ENCODE measurements at regions of chr20 and their contacts with region 1.

Region 1: GRCh38 chr20:31674895-31675827 is 37.4 kb downstream of the COX4I2 start:
- DNase-seq: peak; percentile 92
- H3K4me3 Mint-ChIP-seq: peak overlapping the region; percentile 83
- H3K27ac Mint-ChIP-seq: peak overlapping the region; percentile 89
- H3K4me1 Mint-ChIP-seq: peaks cover 80% of the 10 kb centered on the region
- H3K27me3 Mint-ChIP-seq: no peaks in the 10 kb centered on the region

Region 2: DNA sequence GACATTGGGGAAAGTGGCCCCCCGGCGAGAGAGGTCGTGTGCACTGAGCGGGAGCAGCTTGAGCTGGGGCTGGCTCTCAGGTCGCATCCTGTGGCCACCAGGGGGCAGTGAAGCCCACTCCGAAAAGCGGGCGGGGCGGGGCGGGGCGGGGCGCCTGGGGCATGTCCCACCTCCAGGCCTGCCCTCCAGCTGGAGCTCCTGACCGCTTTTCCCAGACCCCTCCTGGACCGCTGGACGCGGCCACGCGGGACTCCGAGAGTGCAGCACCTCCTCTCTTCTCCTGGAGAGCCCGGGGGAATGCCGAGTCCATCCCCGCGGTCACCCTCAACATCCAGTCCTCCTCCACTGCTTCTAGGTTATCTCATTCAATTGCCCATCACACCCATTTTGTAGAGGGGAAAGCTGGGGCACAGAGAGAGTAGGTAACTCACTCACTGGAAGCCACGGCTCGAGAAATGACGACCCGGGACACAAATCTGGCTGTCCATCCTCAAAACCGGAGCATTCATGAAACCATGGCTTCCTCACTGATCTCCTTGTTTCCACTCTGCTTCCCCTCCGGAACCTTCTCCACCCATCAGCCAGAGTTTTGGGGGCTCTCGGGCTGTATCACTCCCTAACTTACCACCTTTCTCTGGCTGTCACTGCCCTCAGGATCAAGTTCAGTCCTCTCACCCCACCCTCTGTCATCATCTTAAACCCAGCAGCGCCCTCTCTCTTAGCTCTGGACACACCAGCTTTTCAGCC is 13.4 kb before region 1 on chr20:
- intact Hi-C with region 1: loop called (anchors 2 kb)
- DNase-seq: peak; percentile 92
- H3K4me3 Mint-ChIP-seq: peak overlapping the region; percentile 78
- H3K27ac Mint-ChIP-seq: peak overlapping the region; percentile 89
- H3K4me1 Mint-ChIP-seq: peaks cover 47% of the 10 kb centered on the region
- H3K27me3 Mint-ChIP-seq: no peaks in the 10 kb centered on the region

Region 3: DNA sequence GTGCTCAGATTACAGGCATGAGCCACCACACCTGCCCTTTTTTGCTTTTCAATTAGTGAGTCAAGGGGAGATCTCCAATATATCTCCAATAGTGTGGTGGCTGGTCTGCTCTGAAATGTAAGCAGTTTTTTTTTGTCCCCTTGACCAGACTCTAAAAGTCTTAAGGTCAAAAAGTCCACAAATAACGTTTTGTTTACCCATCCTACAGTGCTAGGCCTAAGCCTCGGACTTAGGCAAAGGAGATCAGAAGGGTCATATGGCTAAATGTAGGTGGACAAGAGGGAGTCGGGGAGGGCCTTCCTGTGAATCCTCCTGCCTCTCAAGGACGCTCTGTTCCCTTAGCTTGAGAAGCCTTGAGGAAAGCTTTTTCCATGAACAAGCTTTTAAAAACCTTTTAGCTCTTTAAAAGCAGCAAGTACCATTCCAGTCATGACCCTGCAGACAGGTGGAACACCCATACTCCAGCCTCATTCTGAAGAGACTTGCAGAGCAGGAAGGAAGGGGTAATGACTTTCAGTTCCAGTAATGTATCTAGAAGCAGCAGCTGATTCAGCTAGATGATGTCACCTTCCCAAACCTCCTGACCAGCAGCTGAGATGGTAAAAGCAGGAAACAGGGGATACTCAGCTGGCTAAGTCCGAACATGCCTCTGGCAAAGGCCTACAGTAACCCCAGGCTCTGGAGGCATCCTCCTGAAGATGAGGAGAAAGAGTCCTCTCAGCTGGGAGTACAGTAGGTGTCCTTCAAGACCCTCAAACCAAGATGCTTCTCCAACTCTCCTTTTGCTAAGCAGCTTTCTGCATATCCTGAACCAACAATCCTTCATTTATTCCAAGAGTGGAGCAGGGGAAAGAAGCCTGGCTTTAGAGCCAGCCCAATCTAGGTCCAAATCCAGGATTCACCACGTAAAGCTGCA is 23.9 kb after region 1 on chr20:
- intact Hi-C with region 1: loop called (anchors 2 kb)
- DNase-seq: peak; percentile 81
- H3K4me3 Mint-ChIP-seq: peak overlapping the region; percentile 76
- H3K27ac Mint-ChIP-seq: peak overlapping the region; percentile 84
- H3K4me1 Mint-ChIP-seq: peaks cover 64% of the 10 kb centered on the region
- H3K27me3 Mint-ChIP-seq: no peaks in the 10 kb centered on the region

Region 4: GRCh38 chr20:31712564-31713311 is 37.6 kb after region 1 on chr20:
- intact Hi-C with region 1: loop called (anchors 1 kb)
- DNase-seq: no peak
- H3K4me3 Mint-ChIP-seq: peak overlapping the region; percentile 98
- H3K27ac Mint-ChIP-seq: peak overlapping the region; percentile 63
- H3K4me1 Mint-ChIP-seq: peaks cover 78% of the 10 kb centered on the region
- H3K27me3 Mint-ChIP-seq: no peaks in the 10 kb centered on the region